ENCODE measurements at regions of chr3 and their contacts with region 1.

Region 1: GRCh38 chr3:118199044-118199443 is 835.6 kb downstream of the IGSF11 start:
- DNase-seq: peak in 1 of 3 donors; percentile 5
- ATAC-seq: no peak
- H3K4me3 ChIP-seq: no peak overlapping the region
- H3K4me1 ChIP-seq: no peaks in the 10 kb centered on the region
- CTCF ChIP-seq: no peak

Region 2: GRCh38 chr3:118075873-118076272 is 123.2 kb before region 1 on chr3:
- intact Hi-C with region 1: loop called in 1 of 2 experiments (anchors 10 kb)
- DNase-seq: no peak
- ATAC-seq: no peak
- H3K4me3 ChIP-seq: no peak overlapping the region
- H3K4me1 ChIP-seq: no peaks in the 10 kb centered on the region
- CTCF ChIP-seq: no peak

Region 3: GRCh38 chr3:118544458-118544857 is 345.4 kb after region 1 on chr3:
- intact Hi-C with region 1: no loop called
- DNase-seq: peak; percentile 59 to 65 (median 59)
- ATAC-seq: peak; percentile 96
- H3K4me3 ChIP-seq: no peak overlapping the region
- H3K4me1 ChIP-seq: peaks cover 4% of the 10 kb centered on the region
- CTCF ChIP-seq: no peak

Measured in mucosa of descending colon (tissue), 3 donors.